Ovary (tissue), 10 donors: ENCODE measurements at regions of chr15 and their contacts with region 1.

Region 1: GRCh38 chr15:31080591-31081014 is 20.9 kb downstream of the TRPM1 start:
- DNase-seq: peak; percentile 59 to 85 (median 80)
- H3K4me3 ChIP-seq: no peak overlapping the region
- H3K27ac ChIP-seq: no peak overlapping the region
- H3K4me1 ChIP-seq: no peaks in the 10 kb centered on the region
- H3K27me3 ChIP-seq: no peaks in the 10 kb centered on the region
- CTCF ChIP-seq: no peak
- EP300 ChIP-seq: no peak
- POLR2A ChIP-seq: no peak

Region 2: DNA sequence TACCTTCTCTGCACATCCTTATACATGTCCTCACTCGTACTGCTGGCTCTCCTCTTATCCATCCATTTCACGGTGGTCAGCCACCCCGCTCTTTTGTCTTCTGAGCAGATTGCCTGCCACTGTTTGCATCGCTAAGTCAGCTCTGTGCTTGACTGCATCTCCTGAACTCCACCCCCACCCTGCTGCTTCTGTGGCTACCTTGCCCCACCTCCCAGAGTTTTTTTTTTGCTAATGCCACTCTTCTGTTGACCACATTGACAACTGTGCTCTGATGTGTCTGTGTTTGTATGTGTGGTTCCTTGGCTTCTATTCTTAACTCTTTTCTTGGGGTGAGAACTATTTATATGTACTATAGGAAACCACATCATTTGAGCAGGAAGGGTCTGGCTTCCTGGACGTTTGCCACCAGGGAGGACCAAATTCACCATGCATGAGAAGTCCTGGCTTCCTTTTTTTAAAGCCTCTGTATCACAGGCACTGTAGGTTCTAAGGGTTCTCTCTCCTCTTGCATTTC is 76.3 kb before region 1 on chr15:
- intact Hi-C with region 1: loop called in 1 of 4 experiments (anchors 10 kb)
- DNase-seq: no peak
- H3K4me3 ChIP-seq: no peak overlapping the region
- H3K27ac ChIP-seq: no peak overlapping the region
- H3K4me1 ChIP-seq: no peaks in the 10 kb centered on the region
- H3K27me3 ChIP-seq: no peaks in the 10 kb centered on the region
- CTCF ChIP-seq: no peak
- EP300 ChIP-seq: no peak
- POLR2A ChIP-seq: no peak

Region 3: DNA sequence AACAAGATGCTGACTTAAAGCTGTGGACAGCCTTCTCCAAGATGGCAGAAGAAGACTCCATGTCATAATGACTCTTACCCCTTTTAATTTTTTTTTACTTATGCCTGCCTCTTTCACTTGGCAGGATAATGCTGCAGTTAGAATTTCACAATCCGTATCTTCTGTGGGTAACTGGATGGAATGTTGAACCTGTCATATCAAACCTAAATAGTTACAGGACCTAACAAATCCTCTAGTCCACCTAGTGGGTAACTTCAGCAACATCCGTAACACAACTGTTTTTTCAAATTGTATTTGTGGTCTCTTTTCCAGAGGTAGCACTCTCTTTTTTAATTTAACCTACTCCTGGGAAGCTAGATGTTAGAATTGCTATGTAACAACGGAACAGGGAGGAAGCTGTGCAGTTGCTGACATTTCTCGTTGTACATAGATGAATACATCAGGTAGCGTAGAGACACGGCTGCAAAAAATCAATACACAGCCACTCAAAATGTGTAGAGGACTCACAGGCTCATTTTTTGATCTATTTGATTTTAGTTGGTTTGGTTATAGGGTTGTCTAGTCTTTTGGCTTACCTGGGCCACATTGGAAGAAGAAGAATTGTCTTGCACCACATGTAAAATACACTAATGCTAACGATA is 64.8 kb after region 1 on chr15:
- intact Hi-C with region 1: no loop called
- DNase-seq: no peak
- H3K4me3 ChIP-seq: no peak overlapping the region
- H3K27ac ChIP-seq: no peak overlapping the region
- H3K4me1 ChIP-seq: peaks cover 1% of the 10 kb centered on the region
- H3K27me3 ChIP-seq: no peaks in the 10 kb centered on the region
- CTCF ChIP-seq: no peak
- EP300 ChIP-seq: no peak
- POLR2A ChIP-seq: no peak